H1 (cell line): ENCODE measurements at regions of chr18 and their contacts with region 1.

Region 1: DNA sequence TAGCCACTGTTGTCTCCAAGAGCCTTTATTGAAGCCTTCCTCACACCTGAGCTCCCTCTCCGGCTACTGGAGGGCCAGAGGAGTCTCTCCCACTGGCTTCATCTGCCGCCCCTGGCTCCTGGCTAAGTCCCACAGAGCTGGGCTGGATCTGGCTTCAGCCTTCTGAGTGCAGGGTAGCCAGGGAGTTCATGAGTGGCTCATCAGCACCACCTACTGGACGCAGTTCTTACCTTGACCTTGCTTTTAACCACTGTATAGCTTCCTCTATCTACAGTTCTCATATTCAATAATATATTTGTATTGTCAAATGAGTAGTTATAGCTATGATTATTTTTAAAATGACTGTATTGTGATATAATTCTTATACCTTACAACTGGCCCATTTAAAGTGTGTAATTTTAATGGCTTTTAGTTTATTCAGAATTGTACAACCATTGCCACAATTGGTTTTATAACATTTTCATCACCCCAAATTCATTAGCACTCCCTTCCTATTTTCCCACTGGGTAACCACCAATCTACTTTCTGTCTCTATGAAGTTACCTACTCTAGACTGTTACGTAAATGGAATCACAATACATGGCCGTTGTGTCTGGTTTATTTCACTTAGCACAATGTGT is 17.7 kb downstream of the CNDP1 start:
- DNase-seq: peak; percentile 68 to 84
- H3K4me3 ChIP-seq: no peak overlapping the region
- H3K27ac ChIP-seq: no peak overlapping the region
- H3K4me1 ChIP-seq: no peaks in the 10 kb centered on the region
- H3K27me3 ChIP-seq: no peaks in the 10 kb centered on the region
- CTCF ChIP-seq: peak; percentile 59 to 77 (median 77)
- EP300 ChIP-seq: no peak
- POLR2A ChIP-seq: no peak
- RAD21 ChIP-seq: peak; percentile 91

Region 2: GRCh38 chr18:74196220-74197119 is 355.6 kb before region 1 on chr18:
- CTCF ChIA-PET with region 1: interaction called, 14 read pairs
- POLR2A ChIA-PET with region 1: no interaction called
- DNase-seq: no peak
- H3K4me3 ChIP-seq: peak overlapping the region in 1 of 4 experiments; percentile 27; a peak in 1 of 8 replicates
- H3K27ac ChIP-seq: no peak overlapping the region
- H3K4me1 ChIP-seq: peaks cover 0 to 5% (median 2%) of the 10 kb centered on the region in 4 experiments; a peak in 4 of 7 replicates
- H3K27me3 ChIP-seq: no peaks in the 10 kb centered on the region
- CTCF ChIP-seq: peak; percentile 48 to 76 (median 70)
- EP300 ChIP-seq: no peak
- POLR2A ChIP-seq: no peak
- RAD21 ChIP-seq: peak; percentile 89 to 91

Region 3: DNA sequence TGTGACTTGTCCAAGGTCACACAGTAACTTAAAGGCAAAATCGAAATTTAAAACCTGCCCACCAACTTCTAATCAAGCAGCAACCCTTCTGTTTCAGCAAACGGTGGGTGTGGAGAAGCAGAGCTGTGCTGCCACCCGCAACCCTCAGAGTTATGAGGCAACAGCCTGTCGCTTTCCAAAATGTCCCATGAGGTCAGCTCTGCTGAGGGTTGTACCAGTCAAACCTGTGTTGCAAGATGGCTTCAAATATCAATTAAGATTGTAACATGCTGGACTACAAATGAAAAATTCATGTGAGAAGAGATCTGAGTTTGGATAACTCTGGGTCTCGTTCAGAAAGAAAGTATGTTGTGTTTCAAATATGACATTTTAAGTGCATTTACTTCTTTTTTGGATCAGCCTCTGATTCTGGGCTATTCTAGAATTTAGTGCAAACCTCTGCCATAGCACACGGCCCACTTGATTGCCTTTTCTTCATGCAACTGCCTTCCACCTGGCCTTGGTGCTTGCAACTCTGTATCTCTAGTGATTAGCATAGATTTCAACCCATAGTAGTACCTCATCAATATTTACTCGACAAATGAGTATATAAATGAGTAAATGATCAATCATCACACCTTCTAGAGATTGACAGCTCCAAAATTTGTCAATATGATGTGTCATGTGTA is 334.4 kb before region 1 on chr18:
- CTCF ChIA-PET with region 1: no interaction called
- POLR2A ChIA-PET with region 1: no interaction called
- DNase-seq: no peak
- H3K4me3 ChIP-seq: no peak overlapping the region
- H3K27ac ChIP-seq: no peak overlapping the region
- H3K4me1 ChIP-seq: no peaks in the 10 kb centered on the region
- H3K27me3 ChIP-seq: no peaks in the 10 kb centered on the region
- CTCF ChIP-seq: no peak
- EP300 ChIP-seq: no peak
- POLR2A ChIP-seq: no peak
- RAD21 ChIP-seq: no peak

Region 4: DNA sequence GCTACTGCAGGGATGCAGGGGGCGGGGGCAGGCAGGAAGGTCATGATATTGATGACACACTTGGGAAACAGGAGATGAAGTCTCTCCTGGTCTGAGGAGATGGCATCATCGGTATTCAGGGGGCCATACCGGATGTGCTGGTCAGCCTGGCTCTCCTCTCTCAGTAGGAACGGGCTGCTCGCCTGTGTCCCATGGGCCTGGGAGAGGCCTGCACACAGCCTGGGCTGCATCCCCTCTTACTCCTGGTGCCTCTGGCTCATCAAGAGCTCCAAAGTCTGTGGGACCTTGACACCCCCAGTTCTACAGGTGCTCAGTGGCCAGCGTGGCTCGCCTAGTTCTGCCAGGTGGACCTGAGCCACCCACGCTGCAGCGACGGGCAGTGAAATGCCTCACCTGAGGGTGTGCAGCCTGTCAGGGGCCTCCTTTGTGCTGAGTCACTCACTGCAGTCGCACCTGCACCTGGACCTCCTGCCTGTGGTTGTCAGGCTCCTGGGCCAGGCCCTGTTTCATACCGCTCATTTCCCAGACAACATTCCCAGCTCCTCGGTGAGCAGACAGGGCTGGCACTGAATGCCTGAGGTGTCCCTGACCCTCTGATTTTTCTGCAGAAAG is 36.3 kb before region 1 on chr18:
- CTCF ChIA-PET with region 1: interaction called, 11 read pairs
- POLR2A ChIA-PET with region 1: no interaction called
- DNase-seq: no peak
- H3K4me3 ChIP-seq: no peak overlapping the region
- H3K27ac ChIP-seq: no peak overlapping the region
- H3K4me1 ChIP-seq: no peaks in the 10 kb centered on the region
- H3K27me3 ChIP-seq: no peaks in the 10 kb centered on the region
- CTCF ChIP-seq: no peak
- EP300 ChIP-seq: no peak
- POLR2A ChIP-seq: no peak
- RAD21 ChIP-seq: no peak

Region 5: DNA sequence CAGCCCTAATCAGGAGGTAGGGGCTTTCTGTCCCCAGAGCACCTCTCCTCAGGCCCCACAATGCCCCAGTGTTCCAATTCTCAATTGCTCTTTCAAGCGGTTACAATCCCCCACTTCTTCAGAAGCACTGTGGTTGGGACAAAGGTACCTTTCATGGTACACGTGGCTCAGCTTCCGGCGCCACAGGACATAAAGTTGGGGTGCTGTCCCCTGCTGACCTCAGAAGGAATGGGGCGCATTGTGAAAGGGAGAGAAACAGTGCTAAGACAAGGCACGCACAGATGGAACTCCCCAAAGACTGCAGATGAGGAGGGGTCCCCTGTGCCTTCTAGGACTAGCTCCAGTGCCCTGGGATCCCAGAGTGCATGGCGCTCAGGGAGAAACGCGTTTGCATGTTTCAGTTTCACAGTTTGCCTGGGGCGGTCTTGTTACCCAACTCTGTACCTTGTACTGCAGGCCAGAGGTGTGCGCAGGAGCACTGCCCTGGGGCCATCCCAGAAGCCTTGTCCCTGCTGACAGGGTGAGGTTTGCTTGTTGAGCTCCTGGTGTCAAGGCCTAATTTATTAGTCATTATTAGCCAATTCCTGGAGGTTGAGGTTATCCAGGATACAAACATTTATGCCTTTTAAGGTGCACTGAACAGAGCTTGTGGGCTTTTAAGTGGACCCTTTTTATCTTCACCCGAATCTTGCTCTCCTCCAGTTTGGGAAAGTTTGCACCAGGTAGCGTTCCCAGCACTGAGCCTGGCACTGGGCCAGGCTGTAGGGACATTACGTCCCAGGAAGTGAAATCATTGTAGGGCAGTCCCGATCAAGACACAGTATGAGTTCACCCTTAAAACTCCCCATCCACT is 10.1 kb before region 1 on chr18:
- CTCF ChIA-PET with region 1: interaction called, 14 read pairs
- POLR2A ChIA-PET with region 1: interaction called, 3 read pairs
- DNase-seq: no peak
- H3K4me3 ChIP-seq: no peak overlapping the region
- H3K27ac ChIP-seq: no peak overlapping the region
- H3K4me1 ChIP-seq: no peaks in the 10 kb centered on the region; a peak in 1 of 7 replicates
- H3K27me3 ChIP-seq: no peaks in the 10 kb centered on the region
- CTCF ChIP-seq: no peak
- EP300 ChIP-seq: no peak
- POLR2A ChIP-seq: no peak
- RAD21 ChIP-seq: no peak

Region 6: DNA sequence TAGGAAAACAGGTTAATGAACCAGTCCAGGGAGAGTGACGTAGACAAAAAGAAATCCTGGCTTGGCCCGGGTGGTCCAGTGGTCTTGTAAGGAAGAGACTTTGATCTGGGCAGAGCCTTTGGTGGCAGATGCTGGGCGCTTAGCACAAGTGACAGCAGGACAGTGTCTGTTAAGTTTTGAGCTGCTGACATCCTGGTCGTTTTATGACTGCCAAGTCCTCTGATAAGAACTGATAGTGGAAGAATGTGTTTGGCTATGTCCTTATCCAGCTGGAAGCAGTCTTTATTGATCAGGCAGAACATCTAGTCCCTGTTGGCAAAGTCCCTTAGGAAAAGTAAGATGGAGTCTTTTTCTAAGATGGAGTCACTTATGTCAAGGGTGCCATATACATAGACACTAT is 18.2 kb after region 1 on chr18:
- CTCF ChIA-PET with region 1: interaction called, 12 read pairs
- POLR2A ChIA-PET with region 1: no interaction called
- DNase-seq: no peak
- H3K4me3 ChIP-seq: no peak overlapping the region
- H3K27ac ChIP-seq: no peak overlapping the region
- H3K4me1 ChIP-seq: no peaks in the 10 kb centered on the region
- H3K27me3 ChIP-seq: no peaks in the 10 kb centered on the region
- CTCF ChIP-seq: no peak
- EP300 ChIP-seq: no peak
- POLR2A ChIP-seq: no peak
- RAD21 ChIP-seq: no peak